ENCODE measurements at regions of chr17 and their contacts with region 1.

Region 1: GRCh38 chr17:1516388-1517161 is at the start of gene INPP5K:
- DNase-seq: peak; percentile 99
- ATAC-seq: peak; percentile 99
- total RNA-seq, gene INPP5K: 35.4 TPM

Region 2: GRCh38 chr17:1275962-1276736 is 240.4 kb before region 1 on chr17:
- intact Hi-C with region 1: loop called (anchors 5 kb)
- DNase-seq: peak; percentile 82
- ATAC-seq: peak; percentile 70

Region 3: DNA sequence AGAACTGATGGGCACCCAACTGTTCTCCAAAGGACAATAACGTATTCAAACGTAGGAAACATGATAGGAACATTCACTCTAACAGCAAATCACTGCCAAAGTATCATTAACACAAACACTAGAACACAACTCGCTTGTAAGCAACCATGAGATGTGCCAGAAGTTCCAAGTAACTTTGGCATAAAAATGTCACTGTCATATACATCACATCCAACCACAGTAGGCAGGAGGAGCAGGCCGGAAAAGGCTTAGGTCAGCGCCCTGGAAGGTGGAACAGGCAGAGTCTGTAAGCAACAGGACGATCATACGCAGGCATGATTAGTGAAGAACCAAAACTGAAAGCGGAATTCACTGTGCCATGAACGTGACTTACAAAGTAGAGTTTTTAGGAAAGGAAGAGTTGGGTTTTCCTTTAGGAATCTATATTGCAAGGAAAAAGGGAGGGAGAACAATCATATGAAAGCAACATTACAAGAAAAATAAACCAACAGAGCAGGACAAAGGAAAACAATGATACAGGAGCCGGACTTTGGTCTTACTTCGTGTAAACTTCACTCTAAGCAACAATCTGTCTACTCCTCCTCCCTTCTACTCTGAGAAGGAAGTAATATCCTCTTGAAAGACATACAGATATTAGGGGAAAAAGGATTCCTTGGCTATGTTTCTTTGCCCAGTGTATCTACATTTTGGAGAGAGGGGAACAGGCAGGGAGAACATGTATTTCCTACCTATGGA is 168.8 kb before region 1 on chr17:
- intact Hi-C with region 1: loop called (anchors 5 kb)
- DNase-seq: peak; percentile 54
- ATAC-seq: peak; percentile 59

Region 4: DNA sequence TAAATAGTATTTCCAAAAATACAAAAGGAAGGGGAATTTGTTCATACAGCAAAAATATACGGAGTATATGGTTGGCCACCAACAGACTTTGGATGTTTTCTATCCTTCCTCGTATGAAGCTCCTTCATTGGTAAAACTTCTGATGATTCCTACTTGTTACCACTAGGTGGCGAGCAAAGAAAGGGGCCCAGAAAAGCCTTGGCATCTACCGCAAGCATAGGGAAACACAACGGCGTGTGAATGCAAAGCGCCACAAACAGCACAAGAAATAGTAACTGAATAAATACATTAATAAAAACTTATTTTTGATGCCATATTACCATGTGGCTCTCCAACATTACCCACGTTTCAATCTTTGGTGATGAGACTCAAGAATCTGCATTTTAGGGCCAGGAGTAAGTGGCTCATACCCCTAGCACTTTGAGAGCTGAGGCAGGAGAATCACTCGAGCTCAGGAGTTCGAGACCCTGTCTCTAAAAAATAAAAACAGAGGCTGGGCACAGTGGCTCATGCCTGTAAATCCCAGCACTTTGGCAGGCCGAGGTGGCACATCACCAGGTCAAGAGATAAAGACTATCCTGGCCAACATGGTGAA is 151.0 kb before region 1 on chr17:
- intact Hi-C with region 1: loop called (anchors 2 kb)
- DNase-seq: no peak
- ATAC-seq: peak; percentile 65

Region 5: GRCh38 chr17:1555651-1556471 is 39.3 kb after region 1 on chr17:
- intact Hi-C with region 1: no loop called
- DNase-seq: no peak
- ATAC-seq: no peak